PC-9 (cell line): ENCODE measurements at regions of chr14 and their contacts with region 1.

Region 1: DNA sequence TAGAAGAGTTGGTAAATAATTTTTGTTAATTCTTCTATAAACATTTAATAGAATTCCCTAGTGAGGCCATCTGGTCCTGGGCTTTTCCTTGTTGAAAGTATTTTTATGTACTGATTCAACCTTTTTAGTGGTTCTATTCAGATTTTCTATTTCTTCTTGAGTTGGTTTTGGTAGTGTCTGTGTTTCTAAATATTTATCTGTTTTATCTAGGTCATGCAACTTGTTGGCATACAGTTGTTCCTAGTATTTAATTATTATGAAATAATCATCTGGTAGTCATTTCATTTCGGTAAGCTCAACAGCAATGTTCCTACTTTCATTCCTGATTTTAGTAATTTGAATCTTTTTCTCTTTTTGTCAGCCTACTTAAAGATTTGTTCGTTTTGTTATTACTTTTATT is 234.1 kb upstream of the GARIN2 start:
- DNase-seq: no peak
- H3K4me3 ChIP-seq: no peak overlapping the region
- H3K27ac ChIP-seq: no peak overlapping the region
- H3K4me1 ChIP-seq: no peaks in the 10 kb centered on the region
- H3K27me3 ChIP-seq: no peaks in the 10 kb centered on the region
- CTCF ChIP-seq: no peak

Region 2: DNA sequence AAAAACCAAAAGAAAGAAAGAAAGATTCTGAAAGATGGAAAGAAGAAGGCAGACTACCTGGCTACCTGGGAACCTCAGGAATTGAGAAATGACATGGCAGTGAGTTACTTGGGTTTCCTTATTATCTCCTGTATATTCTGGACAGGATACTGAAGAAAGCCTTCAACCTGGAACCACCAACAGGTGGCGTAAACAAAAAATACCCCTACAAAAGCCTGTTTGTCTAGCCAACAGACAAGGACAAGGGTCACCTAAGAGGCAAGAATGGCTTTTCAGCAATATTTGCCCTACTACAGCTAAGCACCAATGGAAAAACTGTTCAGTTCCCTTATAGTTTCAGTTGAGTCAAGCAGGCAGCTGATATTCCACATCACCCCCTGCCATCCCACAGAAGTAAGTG is 172.3 kb before region 1 on chr14:
- CTCF ChIA-PET with region 1: no interaction called
- POLR2A ChIA-PET with region 1: no interaction called
- intact Hi-C with region 1: no loop called
- DNase-seq: no peak
- H3K4me3 ChIP-seq: no peak overlapping the region
- H3K27ac ChIP-seq: no peak overlapping the region
- H3K4me1 ChIP-seq: no peaks in the 10 kb centered on the region
- H3K27me3 ChIP-seq: no peaks in the 10 kb centered on the region
- CTCF ChIP-seq: no peak

Region 3: DNA sequence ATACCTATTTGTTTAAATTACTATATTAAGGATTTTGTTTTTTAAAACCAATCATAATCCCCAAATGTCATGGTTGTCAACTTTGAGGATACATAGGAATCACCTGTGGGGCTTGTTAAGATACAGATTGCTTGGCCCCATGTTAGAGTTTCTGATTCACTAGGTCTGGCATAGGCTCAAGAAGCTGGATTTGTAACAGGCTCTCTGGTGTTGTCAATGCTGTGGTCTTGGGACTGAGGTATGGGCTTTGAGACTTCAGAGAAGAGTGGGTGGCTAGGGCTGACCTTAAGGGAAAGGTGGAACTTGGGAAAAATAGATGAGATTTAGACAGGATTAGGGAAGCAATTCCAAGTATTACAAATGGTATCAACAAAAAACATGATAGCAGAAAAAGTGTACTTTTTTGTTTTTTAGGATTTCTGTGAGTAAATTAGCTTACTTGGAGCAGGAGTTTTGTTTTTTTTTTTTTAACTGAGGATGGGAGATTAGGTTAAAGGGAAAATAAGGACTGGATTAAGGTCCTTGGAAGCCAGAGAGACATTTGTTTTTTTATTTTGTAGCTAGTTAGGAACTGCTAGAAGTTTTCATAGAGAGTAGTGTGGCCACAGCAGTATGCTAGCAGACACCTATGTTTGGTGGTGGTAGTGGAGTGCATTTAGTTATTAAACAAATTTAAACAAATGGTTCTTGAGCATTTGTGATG is 953.0 kb after region 1 on chr14:
- CTCF ChIA-PET with region 1: no interaction called
- POLR2A ChIA-PET with region 1: interaction called, 16 read pairs
- intact Hi-C with region 1: no loop called
- DNase-seq: no peak
- H3K4me3 ChIP-seq: no peak overlapping the region
- H3K27ac ChIP-seq: no peak overlapping the region
- H3K4me1 ChIP-seq: no peaks in the 10 kb centered on the region
- H3K27me3 ChIP-seq: no peaks in the 10 kb centered on the region
- CTCF ChIP-seq: no peak

Region 4: DNA sequence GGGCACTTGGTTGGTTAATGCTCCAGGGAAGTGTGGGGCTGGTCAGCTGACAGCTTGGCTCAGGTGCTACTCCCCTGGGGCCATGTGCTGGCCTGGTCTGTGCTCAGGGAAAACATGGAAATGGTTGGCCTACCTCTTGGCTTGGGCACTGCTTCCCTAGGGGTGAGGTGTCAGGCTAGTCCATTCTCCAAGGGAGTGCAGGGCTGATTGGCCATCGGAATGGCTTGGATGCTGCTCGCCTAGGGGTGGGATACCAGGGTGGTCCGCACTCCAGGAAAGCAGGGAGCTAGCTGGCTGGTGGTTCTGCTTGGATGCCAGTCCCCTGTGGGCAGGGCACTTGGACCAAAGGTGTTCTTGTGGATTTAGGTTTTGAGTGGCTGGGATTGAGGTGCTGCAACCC is 1110.2 kb after region 1 on chr14:
- CTCF ChIA-PET with region 1: no interaction called
- POLR2A ChIA-PET with region 1: interaction called, 16 read pairs
- intact Hi-C with region 1: no loop called
- DNase-seq: no peak
- H3K4me3 ChIP-seq: no peak overlapping the region
- H3K27ac ChIP-seq: no peak overlapping the region
- H3K4me1 ChIP-seq: no peaks in the 10 kb centered on the region
- H3K27me3 ChIP-seq: no peaks in the 10 kb centered on the region
- CTCF ChIP-seq: no peak